ENCODE measurements at regions of chr1 and their contacts with region 1.

Region 1: DNA sequence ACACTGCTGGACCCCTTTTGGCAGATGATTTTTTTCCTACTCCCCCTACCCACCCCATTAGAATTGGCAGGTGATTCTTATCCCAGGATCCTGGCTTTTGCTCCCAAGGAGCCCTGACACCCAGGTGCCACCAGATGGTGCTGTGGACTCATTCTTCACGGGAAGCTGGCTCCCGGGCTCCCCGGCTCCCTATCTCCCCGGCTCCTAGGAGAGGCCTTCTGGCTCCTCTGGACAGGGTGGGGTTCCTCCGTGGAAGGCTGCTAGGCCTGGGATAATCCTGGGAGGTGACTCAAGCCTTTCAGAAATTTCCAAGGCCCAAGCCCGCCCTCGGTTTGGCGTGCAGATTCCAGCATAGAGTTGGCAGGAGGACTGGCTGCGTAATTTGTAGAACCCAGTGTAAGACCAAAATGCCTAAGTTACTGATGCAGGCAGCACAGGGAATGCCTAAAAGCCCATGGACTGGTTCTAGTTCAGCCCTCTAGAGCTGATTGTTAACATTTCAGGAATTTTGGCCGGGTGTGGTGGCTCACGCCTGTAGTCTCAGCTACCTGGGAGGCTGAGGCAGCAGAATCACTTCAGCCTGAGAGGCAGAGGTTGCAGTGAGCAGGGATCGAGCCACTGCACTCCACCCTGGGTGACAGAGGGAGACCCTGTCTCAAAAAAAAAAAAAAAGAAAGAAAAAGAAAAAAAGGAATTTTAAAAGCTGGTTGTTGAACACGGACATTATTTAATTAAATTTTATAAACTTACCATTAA is 6.8 kb upstream of the BSDC1 start:
- DNase-seq: peak; percentile 87
- H3K4me3 ChIP-seq: no peak overlapping the region
- H3K27ac ChIP-seq: no peak overlapping the region
- H3K4me1 ChIP-seq: no peaks in the 10 kb centered on the region
- H3K27me3 ChIP-seq: no peaks in the 10 kb centered on the region
- CTCF ChIP-seq: peak; percentile 92

Region 2: DNA sequence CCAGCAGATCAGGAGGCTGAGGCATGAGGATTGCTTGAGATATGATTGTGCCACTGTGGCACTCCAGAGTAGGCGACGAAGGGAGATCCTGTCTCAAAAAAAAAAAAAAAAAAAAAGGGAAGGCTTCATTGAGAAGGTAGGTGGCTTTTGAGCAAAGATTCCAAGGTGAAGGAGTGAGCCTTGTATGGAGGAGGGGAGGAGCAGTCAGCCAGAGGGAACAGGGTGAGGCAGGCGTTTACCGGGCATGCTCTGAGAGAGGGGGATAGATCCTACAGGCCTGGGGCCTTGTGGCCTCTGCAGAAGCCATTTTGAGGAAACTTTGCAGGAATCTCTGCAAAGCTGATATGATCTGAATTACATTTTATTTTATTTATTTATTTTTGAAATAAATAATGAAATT is 114.3 kb before region 1 on chr1:
- CTCF ChIA-PET with region 1: interaction called, 15 read pairs
- POLR2A ChIA-PET with region 1: no interaction called
- intact Hi-C with region 1: no loop called
- DNase-seq: no peak
- H3K4me3 ChIP-seq: no peak overlapping the region
- H3K27ac ChIP-seq: no peak overlapping the region
- H3K4me1 ChIP-seq: peaks cover 18% of the 10 kb centered on the region
- H3K27me3 ChIP-seq: no peaks in the 10 kb centered on the region
- CTCF ChIP-seq: no peak

Region 3: GRCh38 chr1:32521165-32521564 is 120.1 kb after region 1 on chr1:
- CTCF ChIA-PET with region 1: no interaction called
- POLR2A ChIA-PET with region 1: no interaction called
- intact Hi-C with region 1: no loop called
- DNase-seq: no peak
- H3K4me3 ChIP-seq: peak overlapping the region; percentile 41
- H3K27ac ChIP-seq: no peak overlapping the region
- H3K4me1 ChIP-seq: no peaks in the 10 kb centered on the region
- H3K27me3 ChIP-seq: no peaks in the 10 kb centered on the region
- CTCF ChIP-seq: no peak

Region 4: GRCh38 chr1:32773018-32773763 is 372.1 kb after region 1 on chr1:
- CTCF ChIA-PET with region 1: no interaction called
- POLR2A ChIA-PET with region 1: no interaction called
- intact Hi-C with region 1: loop called (anchors 1 kb)
- DNase-seq: peak; percentile 78
- H3K4me3 ChIP-seq: no peak overlapping the region
- H3K27ac ChIP-seq: no peak overlapping the region
- H3K4me1 ChIP-seq: no peaks in the 10 kb centered on the region
- H3K27me3 ChIP-seq: no peaks in the 10 kb centered on the region
- CTCF ChIP-seq: peak; percentile 96

Region 5: DNA sequence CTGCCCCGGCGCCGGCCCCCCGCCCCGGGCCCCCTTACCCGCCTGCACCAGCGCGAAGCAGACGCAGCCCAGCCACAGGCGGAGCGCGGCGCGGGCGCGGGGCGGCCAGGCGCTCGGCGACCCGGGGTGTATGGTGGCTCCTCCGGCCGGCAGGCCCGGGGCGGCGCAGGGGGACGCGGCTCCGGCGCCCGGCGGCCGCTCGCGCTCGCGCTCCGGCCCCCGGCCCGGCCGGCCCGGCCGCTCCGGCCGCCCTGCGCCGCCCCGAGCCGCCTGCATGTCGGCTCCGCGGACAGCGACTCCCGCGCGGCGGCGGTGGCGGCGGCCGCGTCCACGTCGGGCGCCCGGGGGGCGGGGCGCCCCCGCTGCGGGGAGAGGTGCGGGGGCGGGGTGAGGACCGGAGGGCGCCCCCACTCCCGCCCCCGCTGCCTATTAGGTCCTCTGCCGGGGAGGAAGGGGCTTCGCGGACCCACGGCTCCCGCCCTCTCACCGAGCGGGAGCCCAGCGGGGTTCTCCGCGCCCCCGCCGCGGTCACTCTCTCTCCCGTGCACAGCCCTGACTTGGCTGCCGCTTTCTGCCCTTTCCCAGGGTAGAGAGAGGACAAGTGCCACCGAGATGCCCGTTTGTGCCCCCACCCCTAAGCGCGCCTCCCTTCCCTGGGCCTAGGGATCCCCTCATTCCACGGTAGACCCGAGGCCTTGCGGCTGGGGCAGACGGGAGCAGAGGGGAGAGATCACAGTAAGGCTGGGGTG is 469.7 kb after region 1 on chr1 and contains the start of gene FNDC5:
- CTCF ChIA-PET with region 1: interaction called, 3 read pairs
- POLR2A ChIA-PET with region 1: no interaction called
- intact Hi-C with region 1: loop called (anchors 2 kb)
- DNase-seq: peak; percentile 42
- H3K4me3 ChIP-seq: peak within 1 kb of the TSS; percentile 48
- H3K27ac ChIP-seq: no peak within 1 kb of the TSS
- H3K4me1 ChIP-seq: peaks cover 5% of the 10 kb centered on the region
- H3K27me3 ChIP-seq: no peaks in the 10 kb centered on the region
- CTCF ChIP-seq: no peak
- total RNA-seq, gene FNDC5: 1.2 and 1.3 TPM in 2 replicates

Region 6: DNA sequence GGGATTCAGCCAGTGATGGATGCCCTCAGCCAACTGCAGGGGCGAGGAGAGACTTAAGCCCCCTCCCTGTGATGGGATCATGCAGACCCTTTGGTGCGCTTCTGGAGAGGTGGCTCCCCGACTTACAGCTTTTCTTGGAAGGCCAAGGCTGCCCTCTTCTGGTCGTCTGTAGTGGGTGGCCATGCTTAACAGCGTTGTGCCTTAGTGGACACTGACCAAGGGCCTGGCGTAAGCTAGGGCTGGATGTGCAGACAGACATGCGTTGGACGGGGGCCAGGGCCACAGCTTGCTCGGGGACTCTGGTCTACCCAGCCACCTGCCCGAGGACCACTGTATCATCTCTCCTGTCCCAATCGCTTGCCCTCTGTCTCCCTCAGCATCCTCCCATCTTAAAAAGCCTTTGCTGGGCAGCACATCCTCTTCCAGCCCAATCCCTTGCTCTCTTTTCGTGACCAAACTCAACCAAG is 685.4 kb after region 1 on chr1:
- CTCF ChIA-PET with region 1: no interaction called
- POLR2A ChIA-PET with region 1: no interaction called
- intact Hi-C with region 1: loop called (anchors 5 kb)
- DNase-seq: peak; percentile 63
- H3K4me3 ChIP-seq: no peak overlapping the region
- H3K27ac ChIP-seq: no peak overlapping the region
- H3K4me1 ChIP-seq: no peaks in the 10 kb centered on the region
- H3K27me3 ChIP-seq: no peaks in the 10 kb centered on the region
- CTCF ChIP-seq: peak; percentile 77